ENCODE measurements at regions of chr14 and their contacts with region 1.

Region 1: GRCh38 chr14:85653029-85653428 is 123.1 kb downstream of the FLRT2 start:
- DNase-seq: no peak

Region 2: GRCh38 chr14:85024931-85025330 is 628.1 kb before region 1 on chr14:
- intact Hi-C with region 1: no loop called
- DNase-seq: peak; percentile 58

Region 3: DNA sequence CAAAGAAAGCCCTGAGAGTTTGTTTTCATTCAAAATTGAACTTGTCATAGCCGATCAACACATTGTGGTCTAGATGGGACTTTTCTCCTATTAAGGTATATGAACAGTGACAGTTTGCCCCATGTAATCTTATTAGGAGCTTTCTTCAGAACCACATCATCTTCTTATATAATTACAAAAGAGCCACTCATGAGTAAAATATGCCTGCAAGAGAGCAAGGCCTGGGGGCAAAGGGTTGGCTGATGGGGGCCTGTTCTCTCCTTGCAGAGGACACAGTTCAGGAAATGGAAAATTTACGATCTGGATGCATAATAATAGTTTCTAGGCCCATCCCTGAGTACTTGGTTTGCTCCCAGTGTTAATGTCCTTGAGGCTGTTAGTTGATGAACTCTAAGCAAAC is 35.2 kb before region 1 on chr14:
- intact Hi-C with region 1: no loop called
- DNase-seq: no peak

Region 4: DNA sequence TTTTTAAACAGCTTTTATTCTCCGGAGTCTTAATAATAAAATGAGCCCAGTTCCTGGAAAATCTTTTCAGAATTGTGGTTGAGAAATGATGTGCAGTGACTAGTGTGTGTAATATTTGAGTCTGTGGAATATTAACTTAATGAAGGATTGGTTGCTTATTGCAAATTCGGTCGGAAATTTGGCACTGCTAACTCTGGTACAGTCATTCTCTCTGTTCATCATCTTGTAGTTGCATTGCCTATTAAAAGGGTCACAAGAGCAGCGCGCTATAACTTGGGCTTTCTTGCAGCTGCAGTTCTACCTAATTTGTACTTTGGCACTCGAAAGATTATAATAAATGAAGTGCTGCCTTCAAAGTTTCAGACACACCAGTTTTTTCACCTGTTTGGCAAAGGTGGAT is 22.9 kb after region 1 on chr14:
- intact Hi-C with region 1: loop called in 1 of 2 experiments (anchors 1 kb)
- DNase-seq: no peak

Region 5: GRCh38 chr14:85688006-85688405 is 35.0 kb after region 1 on chr14:
- intact Hi-C with region 1: no loop called
- DNase-seq: no peak

Measured in posterior vena cava (tissue), 2 donors.